CD4-positive, alpha-beta memory T cell (primary cell): ENCODE measurements at regions of chr9 and their contacts with region 1.

Region 1: GRCh38 chr9:72364679-72365524 is at the start of gene ZFAND5:
- DNase-seq: peak; percentile 89 to 93 (median 91)
- H3K4me3 ChIP-seq: peak within 1 kb of the TSS; percentile 98
- H3K4me3 Mint-ChIP-seq: peak within 1 kb of the TSS; percentile 90 to 97 (median 96)
- H3K27ac ChIP-seq: peak within 1 kb of the TSS; percentile 97
- H3K27ac Mint-ChIP-seq: peak within 1 kb of the TSS; percentile 96 to 100 (median 99)
- H3K4me1 ChIP-seq: peaks cover 43% of the 10 kb centered on the region
- H3K4me1 Mint-ChIP-seq: peaks cover 27 to 50% (median 37%) of the 10 kb centered on the region in 4 donors
- H3K27me3 ChIP-seq: no peaks in the 10 kb centered on the region
- H3K27me3 Mint-ChIP-seq: no peaks in the 10 kb centered on the region
- total RNA-seq, gene ZFAND5: 143 to 148 TPM

Region 2: GRCh38 chr9:71911253-71912074 is 453.4 kb before region 1 on chr9 and contains the start of gene C9orf85:
- CTCF ChIA-PET with region 1: no interaction called
- POLR2A ChIA-PET with region 1: interaction called, 3 read pairs
- intact Hi-C with region 1: loop called (anchors 1 kb)
- DNase-seq: peak; percentile 94 to 98 (median 96)
- H3K4me3 ChIP-seq: peak within 1 kb of the TSS; percentile 77 to 83
- H3K4me3 Mint-ChIP-seq: peak within 1 kb of the TSS; percentile 99 to 100 (median 100)
- H3K27ac ChIP-seq: peak within 1 kb of the TSS; percentile 74
- H3K27ac Mint-ChIP-seq: peak within 1 kb of the TSS; percentile 92 to 100 (median 97)
- H3K4me1 ChIP-seq: peaks cover 51% of the 10 kb centered on the region
- H3K4me1 Mint-ChIP-seq: peaks cover 46 to 76% (median 54%) of the 10 kb centered on the region in 4 donors
- H3K27me3 ChIP-seq: no peaks in the 10 kb centered on the region
- H3K27me3 Mint-ChIP-seq: no peaks in the 10 kb centered on the region
- total RNA-seq, gene C9orf85: 8.2 to 10.6 TPM

Region 3: GRCh38 chr9:72305102-72305546 is 59.8 kb before region 1 on chr9:
- CTCF ChIA-PET with region 1: no interaction called
- POLR2A ChIA-PET with region 1: interaction called, 6 read pairs
- intact Hi-C with region 1: loop called (anchors 5 kb)
- DNase-seq: peak in 2 of 5 donors; percentile 8 to 15
- H3K4me3 ChIP-seq: no peak overlapping the region
- H3K4me3 Mint-ChIP-seq: peak overlapping the region; percentile 18 to 78 (median 62)
- H3K27ac ChIP-seq: peak overlapping the region; percentile 11
- H3K27ac Mint-ChIP-seq: peak overlapping the region; percentile 57 to 92 (median 84)
- H3K4me1 ChIP-seq: peaks cover 30% of the 10 kb centered on the region
- H3K4me1 Mint-ChIP-seq: peaks cover 26 to 46% (median 31%) of the 10 kb centered on the region in 4 donors
- H3K27me3 ChIP-seq: no peaks in the 10 kb centered on the region
- H3K27me3 Mint-ChIP-seq: peaks cover 0 to 1% of the 10 kb centered on the region in 2 donors

Region 4: DNA sequence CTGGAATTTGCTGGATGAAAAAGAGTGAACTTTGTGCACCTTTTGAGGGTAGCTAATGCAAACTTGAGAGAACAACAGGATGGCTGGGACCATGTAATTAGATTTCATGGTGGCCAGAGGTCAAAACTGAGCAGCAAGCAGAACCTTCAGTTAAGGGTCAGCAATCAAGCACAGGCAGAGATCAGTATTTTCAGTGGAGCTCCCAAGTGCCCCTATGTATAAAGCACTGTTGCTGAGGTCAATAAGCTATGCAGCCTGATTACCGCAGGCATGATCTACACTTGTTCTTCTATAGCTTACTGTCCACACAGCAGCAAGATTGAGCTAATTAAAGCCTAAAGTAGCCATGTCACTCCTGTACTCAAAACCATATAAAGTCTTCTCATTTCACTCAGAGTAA is 94.4 kb after region 1 on chr9:
- CTCF ChIA-PET with region 1: no interaction called
- POLR2A ChIA-PET with region 1: interaction called, 11 read pairs
- intact Hi-C with region 1: no loop called
- DNase-seq: no peak
- H3K4me3 ChIP-seq: no peak overlapping the region
- H3K4me3 Mint-ChIP-seq: no peak overlapping the region
- H3K27ac ChIP-seq: no peak overlapping the region
- H3K27ac Mint-ChIP-seq: peak overlapping the region in 1 of 7 donors; percentile 55
- H3K4me1 ChIP-seq: peaks cover 17% of the 10 kb centered on the region
- H3K4me1 Mint-ChIP-seq: peaks cover 10 to 21% (median 18%) of the 10 kb centered on the region in 4 donors
- H3K27me3 ChIP-seq: no peaks in the 10 kb centered on the region
- H3K27me3 Mint-ChIP-seq: peaks cover 0 to 3% of the 10 kb centered on the region in 2 donors

Region 5: GRCh38 chr9:72592502-72593403 is 227.9 kb after region 1 on chr9:
- CTCF ChIA-PET with region 1: interaction called, 7 read pairs
- POLR2A ChIA-PET with region 1: interaction called, 16 read pairs
- intact Hi-C with region 1: loop called (anchors 1 kb)
- DNase-seq: peak in 4 of 5 donors; percentile 50 to 58 (median 56)
- H3K4me3 ChIP-seq: no peak overlapping the region
- H3K4me3 Mint-ChIP-seq: no peak overlapping the region
- H3K27ac ChIP-seq: no peak overlapping the region
- H3K27ac Mint-ChIP-seq: no peak overlapping the region
- H3K4me1 ChIP-seq: peaks cover 7% of the 10 kb centered on the region
- H3K4me1 Mint-ChIP-seq: peaks cover 8 to 22% (median 10%) of the 10 kb centered on the region in 4 donors
- H3K27me3 ChIP-seq: no peaks in the 10 kb centered on the region
- H3K27me3 Mint-ChIP-seq: peaks cover 3 to 6% of the 10 kb centered on the region in 2 donors